ENCODE measurements at regions of chr2 and their contacts with region 1.

Region 1: GRCh38 chr2:68751397-68752339 is 17.1 kb downstream of the ARHGAP25 start:
- DNase-seq: peak; percentile 31
- H3K4me3 ChIP-seq: no peak overlapping the region
- CTCF ChIP-seq: peak; percentile 94

Region 2: GRCh38 chr2:68709421-68709911 is 42.2 kb before region 1 on chr2:
- CTCF ChIA-PET with region 1: interaction called, 17 read pairs
- POLR2A ChIA-PET with region 1: interaction called, 3 read pairs
- DNase-seq: no peak
- H3K4me3 ChIP-seq: no peak overlapping the region
- CTCF ChIP-seq: peak; percentile 62

Region 3: DNA sequence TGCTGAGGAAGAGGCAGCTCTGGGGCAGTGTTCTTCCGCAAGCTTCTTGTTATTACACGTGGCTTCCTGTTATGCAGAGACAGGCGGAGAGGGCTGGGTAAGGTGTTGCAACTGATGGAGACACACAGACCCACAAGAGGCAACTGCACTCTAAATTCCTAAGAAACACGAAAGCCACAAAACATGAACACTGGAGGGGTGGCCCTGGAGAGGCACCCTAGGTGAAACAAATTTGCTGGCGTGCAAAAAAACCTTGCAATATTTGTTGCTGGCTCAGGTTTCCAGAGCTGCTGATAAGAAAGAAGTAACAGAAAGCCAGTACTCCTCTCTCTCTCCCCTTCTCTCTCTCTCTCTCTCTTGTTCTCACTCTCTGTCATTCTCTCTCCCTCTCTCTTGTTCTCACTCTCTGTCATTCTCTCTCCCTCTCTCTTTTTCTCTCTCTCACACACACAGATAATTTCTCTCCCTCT is 14.7 kb after region 1 on chr2:
- CTCF ChIA-PET with region 1: interaction called, 76 read pairs
- POLR2A ChIA-PET with region 1: no interaction called
- DNase-seq: no peak
- H3K4me3 ChIP-seq: no peak overlapping the region
- CTCF ChIP-seq: no peak

Region 4: GRCh38 chr2:68828887-68829708 is 77.4 kb after region 1 on chr2:
- CTCF ChIA-PET with region 1: interaction called, 13 read pairs
- POLR2A ChIA-PET with region 1: no interaction called
- DNase-seq: peak; percentile 82
- H3K4me3 ChIP-seq: no peak overlapping the region
- CTCF ChIP-seq: no peak

Region 5: DNA sequence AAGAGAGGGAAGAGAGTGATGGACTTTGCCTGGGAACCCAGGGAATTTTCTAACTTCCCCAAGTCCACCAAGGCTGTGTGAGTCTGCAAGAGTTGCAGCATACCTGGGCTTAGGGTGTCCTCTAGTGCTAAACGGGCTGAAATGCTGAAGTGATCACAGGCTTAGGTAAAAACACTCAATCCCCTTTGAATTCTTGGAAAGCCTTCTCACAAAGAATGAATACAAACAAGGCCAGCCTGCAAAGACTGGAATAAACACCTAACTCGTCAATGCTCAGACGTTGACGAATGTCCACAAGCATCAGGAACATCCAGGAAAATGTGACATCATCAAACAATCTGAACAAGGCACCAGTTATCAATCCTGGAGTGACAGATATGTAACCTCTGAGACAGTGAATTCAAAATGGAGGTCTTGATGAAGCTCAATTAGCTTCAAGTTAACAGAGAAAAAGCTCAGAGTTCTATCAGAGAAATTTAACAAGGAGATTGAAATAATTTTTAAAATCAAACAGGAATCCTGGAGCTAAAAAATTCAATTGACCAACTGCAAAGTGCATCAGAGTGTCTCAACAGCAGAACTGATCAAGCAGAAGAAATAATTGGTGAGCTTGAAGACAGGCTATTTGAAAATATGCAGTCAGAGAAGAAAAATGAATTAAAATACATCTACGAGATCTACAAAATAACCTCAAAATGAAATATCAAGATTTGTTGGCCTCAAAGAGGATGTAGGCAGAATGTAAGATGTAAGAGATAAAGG is 149.7 kb after region 1 on chr2:
- CTCF ChIA-PET with region 1: interaction called, 151 read pairs
- POLR2A ChIA-PET with region 1: no interaction called
- DNase-seq: no peak
- H3K4me3 ChIP-seq: no peak overlapping the region
- CTCF ChIP-seq: peak; percentile 6

Region 6: DNA sequence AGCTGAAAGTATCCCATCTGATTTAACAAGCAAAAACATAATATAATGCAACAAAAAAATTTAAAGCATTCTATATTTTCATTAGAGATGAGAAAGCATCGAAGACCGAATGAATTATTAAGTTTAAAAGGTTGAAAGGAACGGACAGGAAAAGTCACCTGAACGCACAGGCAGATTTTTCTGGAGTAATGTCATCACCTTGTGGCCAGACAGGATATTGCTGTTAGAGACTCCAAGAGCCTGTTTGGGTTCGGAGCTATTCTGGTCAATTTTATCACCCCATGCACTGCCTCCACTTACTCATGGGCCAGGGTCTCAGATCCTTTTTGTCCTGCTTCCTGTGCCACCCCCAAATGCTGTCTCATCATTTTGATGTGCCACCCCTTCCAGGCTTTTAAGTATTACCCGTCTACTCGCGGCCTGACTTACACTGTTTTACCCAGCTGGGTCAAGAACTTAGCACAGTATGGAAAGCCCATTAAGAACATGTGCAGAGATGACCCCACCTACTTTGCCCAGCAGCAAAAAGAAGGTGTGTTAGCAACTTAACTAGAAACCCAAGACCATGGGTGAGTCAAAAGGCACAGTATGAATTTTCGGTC is 173.7 kb after region 1 on chr2:
- CTCF ChIA-PET with region 1: interaction called, 122 read pairs
- POLR2A ChIA-PET with region 1: no interaction called
- DNase-seq: no peak
- H3K4me3 ChIP-seq: no peak overlapping the region
- CTCF ChIP-seq: peak; percentile 72